ENCODE measurements at regions of chr20 and their contacts with region 1.

Region 1: GRCh38 chr20:25247956-25248785 is at the start of gene PYGB:
- DNase-seq: peak; percentile 84
- ATAC-seq: peak; percentile 87
- H3K4me3 ChIP-seq: peak within 1 kb of the TSS; percentile 11 to 96 (median 88)
- H3K4me3 Mint-ChIP-seq: peak within 1 kb of the TSS; percentile 96
- H3K27ac ChIP-seq: peak within 1 kb of the TSS in 1 of 2 donors; percentile 55
- H3K27ac Mint-ChIP-seq: peak within 1 kb of the TSS; percentile 88
- H3K4me1 ChIP-seq: peaks cover 18 to 21% of the 10 kb centered on the region in 2 donors
- H3K4me1 Mint-ChIP-seq: peaks cover 31% of the 10 kb centered on the region
- H3K27me3 ChIP-seq: peaks cover 0 to 9% (median 3%) of the 10 kb centered on the region in 4 experiments
- H3K27me3 Mint-ChIP-seq: peaks cover 12% of the 10 kb centered on the region
- CTCF ChIP-seq: no peak
- total RNA-seq, gene PYGB: 30.6 and 30.8 TPM in 2 replicates

Region 2: DNA sequence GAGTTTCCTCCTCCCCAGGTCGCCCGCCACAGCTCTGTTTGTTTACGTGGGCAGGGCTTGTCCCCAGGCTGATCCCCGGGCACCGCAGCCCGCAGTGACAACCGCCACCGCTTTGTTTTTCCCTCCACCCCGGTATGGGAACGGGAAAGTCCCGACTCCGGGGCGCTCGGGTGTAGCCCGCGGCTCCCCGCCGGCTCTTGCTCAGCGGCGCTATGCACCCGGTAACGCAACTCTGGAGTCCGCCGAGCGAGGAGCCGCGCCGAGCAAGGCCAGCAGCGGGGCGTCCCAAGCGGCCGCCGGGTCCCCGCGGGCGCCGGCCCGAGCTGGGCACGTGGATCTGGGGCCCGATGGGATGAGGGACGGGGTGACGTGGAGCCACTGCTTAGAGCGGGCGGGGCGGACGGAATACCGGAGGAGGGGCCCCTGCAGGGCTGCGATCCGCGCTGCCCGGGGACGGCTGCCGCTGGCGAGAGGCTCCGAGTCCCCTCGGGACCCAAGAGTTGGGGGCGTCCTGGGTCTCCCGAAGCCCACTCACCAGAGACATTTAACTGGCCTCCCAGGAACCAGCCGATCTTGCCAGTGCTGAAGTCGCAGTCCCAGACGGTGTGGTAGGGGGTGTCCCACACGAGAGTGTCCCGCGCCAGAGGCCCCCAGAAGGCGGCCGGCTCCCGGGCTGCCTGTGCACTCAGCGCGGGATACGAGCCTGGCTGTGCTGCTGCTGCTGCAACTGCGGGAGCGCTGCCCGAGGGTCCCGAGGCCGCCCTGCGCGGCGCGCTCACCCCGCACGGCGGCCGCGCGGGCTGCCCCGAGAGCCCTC is 190.7 kb before region 1 on chr20:
- CTCF ChIA-PET with region 1: interaction called, 4 read pairs
- POLR2A ChIA-PET with region 1: no interaction called
- intact Hi-C with region 1: loop called (anchors 2 kb)
- DNase-seq: peak; percentile 89
- ATAC-seq: peak; percentile 41
- H3K4me3 ChIP-seq: peak overlapping the region; percentile 45 to 91 (median 76)
- H3K4me3 Mint-ChIP-seq: peak overlapping the region; percentile 93
- H3K27ac ChIP-seq: peak overlapping the region; percentile 90 to 93
- H3K27ac Mint-ChIP-seq: peak overlapping the region; percentile 97
- H3K4me1 ChIP-seq: peaks cover 58 to 63% of the 10 kb centered on the region in 2 donors
- H3K4me1 Mint-ChIP-seq: peaks cover 60% of the 10 kb centered on the region
- H3K27me3 ChIP-seq: no peaks in the 10 kb centered on the region
- H3K27me3 Mint-ChIP-seq: no peaks in the 10 kb centered on the region
- CTCF ChIP-seq: no peak

Region 3: DNA sequence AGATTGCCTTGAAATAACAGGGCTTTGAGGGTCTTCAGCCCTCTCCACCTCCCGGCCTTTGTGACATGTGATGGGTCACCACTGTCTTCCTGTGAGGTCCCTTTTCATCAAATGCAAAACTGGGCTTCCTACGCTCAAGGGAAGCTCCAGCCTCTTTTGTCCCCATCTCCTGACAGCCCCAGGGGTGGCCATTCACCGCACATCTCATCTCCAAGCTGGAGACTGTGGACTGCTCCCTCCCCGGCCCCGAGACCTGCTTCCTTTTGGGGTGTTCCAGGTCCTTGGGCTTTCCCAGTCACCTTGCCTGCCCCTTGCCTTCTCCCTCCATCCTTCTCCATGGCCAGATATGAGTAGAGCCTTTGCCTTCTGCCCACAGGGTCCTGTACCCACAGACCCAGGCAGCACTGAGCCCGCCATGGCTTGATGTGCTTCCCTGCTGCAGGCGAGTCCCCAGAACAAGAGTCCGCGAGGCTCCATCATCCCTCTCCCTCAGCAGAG is 21.5 kb after region 1 on chr20:
- CTCF ChIA-PET with region 1: no interaction called
- POLR2A ChIA-PET with region 1: no interaction called
- intact Hi-C with region 1: no loop called
- DNase-seq: no peak
- ATAC-seq: no peak
- H3K4me3 ChIP-seq: no peak overlapping the region
- H3K4me3 Mint-ChIP-seq: no peak overlapping the region
- H3K27ac ChIP-seq: no peak overlapping the region
- H3K27ac Mint-ChIP-seq: no peak overlapping the region
- H3K4me1 ChIP-seq: no peaks in the 10 kb centered on the region
- H3K4me1 Mint-ChIP-seq: peaks cover 8% of the 10 kb centered on the region
- H3K27me3 ChIP-seq: no peaks in the 10 kb centered on the region
- H3K27me3 Mint-ChIP-seq: no peaks in the 10 kb centered on the region
- CTCF ChIP-seq: no peak

Region 4: DNA sequence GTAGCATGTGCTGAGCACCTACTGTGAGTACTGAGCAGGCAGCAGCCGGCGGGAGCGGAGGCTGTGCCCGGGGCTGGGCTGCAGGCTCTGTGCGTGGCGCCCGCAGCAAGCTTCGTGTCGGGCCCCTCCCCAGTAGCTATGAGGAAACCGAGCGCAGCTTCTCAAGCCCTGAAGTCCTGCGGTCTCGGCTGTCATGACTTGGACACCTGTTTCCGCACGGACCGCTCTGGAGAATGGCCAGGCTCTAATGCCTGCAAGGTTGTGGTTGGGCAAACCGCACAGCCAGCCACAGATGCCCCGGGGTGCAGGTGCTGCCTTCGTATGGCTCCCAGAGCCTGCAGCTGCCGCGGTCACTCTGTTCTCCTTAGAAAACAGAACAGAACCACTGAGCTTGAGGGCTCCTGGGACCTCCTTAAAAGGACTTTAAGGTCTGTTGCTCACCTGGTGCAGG is 33.4 kb after region 1 on chr20:
- CTCF ChIA-PET with region 1: no interaction called
- POLR2A ChIA-PET with region 1: interaction called, 5 read pairs
- intact Hi-C with region 1: loop called (anchors 5 kb)
- DNase-seq: peak; percentile 77
- ATAC-seq: peak; percentile 56
- H3K4me3 ChIP-seq: no peak overlapping the region
- H3K4me3 Mint-ChIP-seq: no peak overlapping the region
- H3K27ac ChIP-seq: no peak overlapping the region
- H3K27ac Mint-ChIP-seq: no peak overlapping the region
- H3K4me1 ChIP-seq: peaks cover 25 to 33% of the 10 kb centered on the region in 2 donors
- H3K4me1 Mint-ChIP-seq: peaks cover 29% of the 10 kb centered on the region
- H3K27me3 ChIP-seq: no peaks in the 10 kb centered on the region
- H3K27me3 Mint-ChIP-seq: no peaks in the 10 kb centered on the region
- CTCF ChIP-seq: no peak

Region 5: GRCh38 chr20:25623736-25624499 is 375.7 kb after region 1 on chr20 and contains the start of gene NANP:
- CTCF ChIA-PET with region 1: no interaction called
- POLR2A ChIA-PET with region 1: no interaction called
- intact Hi-C with region 1: loop called (anchors 2 kb)
- DNase-seq: peak; percentile 95
- ATAC-seq: peak; percentile 84
- H3K4me3 ChIP-seq: peak within 1 kb of the TSS; percentile 70 to 97 (median 89)
- H3K4me3 Mint-ChIP-seq: peak within 1 kb of the TSS; percentile 98
- H3K27ac ChIP-seq: peak within 1 kb of the TSS; percentile 68 to 90
- H3K27ac Mint-ChIP-seq: peak within 1 kb of the TSS; percentile 98
- H3K4me1 ChIP-seq: peaks cover 18% of the 10 kb centered on the region in 2 donors
- H3K4me1 Mint-ChIP-seq: peaks cover 32% of the 10 kb centered on the region
- H3K27me3 ChIP-seq: no peaks in the 10 kb centered on the region
- H3K27me3 Mint-ChIP-seq: no peaks in the 10 kb centered on the region
- CTCF ChIP-seq: no peak
- total RNA-seq, gene NANP: 1.8 and 2.3 TPM in 2 replicates

Measured in B cell (primary cell).